Activated CD8-positive, alpha-beta T cell treated with anti-CD3 and anti-CD28 coated beads for 36 hours (primary cell): ENCODE measurements at regions of chr12 and their contacts with region 1.

Region 1: DNA sequence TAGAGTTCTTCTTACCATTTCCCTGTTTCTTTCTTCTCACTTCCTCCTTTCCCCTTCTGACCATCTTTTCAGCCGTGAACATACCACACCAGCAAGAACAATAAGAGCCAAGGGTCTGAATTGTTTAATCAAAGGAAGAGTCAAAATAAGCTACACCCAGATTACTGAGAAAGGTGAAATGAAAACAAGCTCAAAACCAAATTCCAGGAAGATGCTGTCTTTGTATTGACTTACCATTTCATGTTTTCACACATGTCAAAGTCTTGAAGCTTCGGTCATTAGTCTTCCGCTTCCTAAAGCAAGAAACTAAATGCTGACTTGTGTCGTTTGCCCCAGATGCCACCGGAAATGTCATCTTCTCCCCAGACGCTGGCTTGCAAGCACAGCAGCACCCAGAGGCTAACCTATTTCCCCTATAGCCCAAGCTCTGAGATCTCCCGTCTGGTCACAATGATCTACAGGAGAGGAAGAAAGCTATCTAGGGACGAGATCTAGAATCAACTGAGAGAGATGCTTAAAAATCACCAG is 136.5 kb upstream of the AMIGO2 start:
- DNase-seq: peak; percentile 87
- ATAC-seq: peak; percentile 52
- H3K4me3 Mint-ChIP-seq: peak overlapping the region; percentile 79
- H3K27ac Mint-ChIP-seq: peak overlapping the region; percentile 96
- H3K4me1 Mint-ChIP-seq: peaks cover 10% of the 10 kb centered on the region
- H3K27me3 Mint-ChIP-seq: no peaks in the 10 kb centered on the region
- CTCF ChIP-seq: no peak

Region 2: DNA sequence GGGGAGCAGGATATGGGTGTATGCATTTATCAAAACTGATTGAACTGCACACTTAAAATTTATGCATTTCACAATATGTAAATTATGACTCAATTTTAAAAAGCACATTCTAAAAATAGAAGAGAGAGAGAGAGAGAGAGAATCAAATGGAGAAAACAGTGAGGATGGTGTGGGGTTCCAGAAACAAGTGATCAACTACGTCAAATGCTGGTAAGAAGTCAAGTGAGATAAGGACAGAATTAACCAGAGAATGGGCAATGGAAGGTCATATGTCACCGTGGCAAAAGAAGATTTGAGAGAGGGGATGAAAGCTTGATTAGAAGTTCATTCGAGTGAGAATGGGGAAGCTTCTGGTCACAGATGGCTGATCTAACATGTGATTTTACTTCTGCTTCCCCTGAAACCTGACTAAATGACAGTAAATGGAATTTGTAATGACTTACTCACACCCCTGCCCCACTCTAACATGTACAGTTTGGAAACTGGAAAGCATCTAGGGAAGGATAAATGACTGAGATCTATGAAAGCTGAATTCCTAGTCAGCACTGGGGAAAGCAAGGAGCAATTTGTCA is 140.0 kb after region 1 on chr12:
- CTCF ChIA-PET with region 1: interaction called, 3 read pairs
- POLR2A ChIA-PET with region 1: interaction called, 6 read pairs
- intact Hi-C with region 1: loop called (anchors 5 kb)
- DNase-seq: peak; percentile 56
- ATAC-seq: peak; percentile 67
- H3K4me3 Mint-ChIP-seq: peak overlapping the region; percentile 53
- H3K27ac Mint-ChIP-seq: peak overlapping the region; percentile 99
- H3K4me1 Mint-ChIP-seq: peaks cover 80% of the 10 kb centered on the region
- H3K27me3 Mint-ChIP-seq: no peaks in the 10 kb centered on the region
- CTCF ChIP-seq: no peak